ENCODE measurements at regions of chr1 and their contacts with region 1.

Region 1: DNA sequence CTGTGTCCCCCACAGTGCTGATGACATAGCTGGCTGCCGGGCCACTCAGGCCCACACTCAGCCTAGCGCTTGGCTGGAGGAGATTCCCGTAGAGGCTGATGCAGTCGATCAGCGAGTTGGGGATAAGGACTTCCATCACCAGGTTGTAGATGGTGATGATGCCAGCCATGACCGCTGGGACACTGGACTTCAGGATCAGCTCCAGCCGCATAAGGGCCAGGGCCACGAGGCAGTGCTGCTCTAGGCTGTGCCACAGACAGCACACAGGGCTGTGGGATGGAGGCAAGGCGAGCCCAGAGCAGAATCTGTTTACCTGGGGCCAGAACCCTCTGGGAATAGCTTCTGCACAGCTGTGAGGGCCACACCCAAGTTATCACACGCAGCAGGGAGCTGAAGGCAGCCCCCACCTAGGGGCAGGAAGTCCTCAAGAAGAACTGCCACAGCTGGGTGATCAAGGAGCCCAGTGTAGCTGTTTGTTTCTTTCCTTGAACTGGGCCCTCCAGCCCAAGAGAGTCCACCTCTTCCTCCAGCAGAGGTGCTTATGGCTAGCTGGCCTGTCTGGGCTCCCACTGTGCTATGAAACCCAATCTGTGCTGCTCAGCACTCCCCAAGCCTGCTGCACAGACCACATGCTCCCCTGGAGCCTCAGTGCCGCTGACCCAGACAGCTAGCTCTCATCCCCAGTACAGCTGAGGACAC is 6.2 kb downstream of the SLC2A1 start:
- DNase-seq: peak; percentile 58
- ATAC-seq: peak; percentile 58
- H3K4me3 Mint-ChIP-seq: peak overlapping the region; percentile 49
- H3K27ac Mint-ChIP-seq: peak overlapping the region; percentile 78
- H3K4me1 Mint-ChIP-seq: peaks cover 88% of the 10 kb centered on the region
- H3K27me3 Mint-ChIP-seq: no peaks in the 10 kb centered on the region

Region 2: DNA sequence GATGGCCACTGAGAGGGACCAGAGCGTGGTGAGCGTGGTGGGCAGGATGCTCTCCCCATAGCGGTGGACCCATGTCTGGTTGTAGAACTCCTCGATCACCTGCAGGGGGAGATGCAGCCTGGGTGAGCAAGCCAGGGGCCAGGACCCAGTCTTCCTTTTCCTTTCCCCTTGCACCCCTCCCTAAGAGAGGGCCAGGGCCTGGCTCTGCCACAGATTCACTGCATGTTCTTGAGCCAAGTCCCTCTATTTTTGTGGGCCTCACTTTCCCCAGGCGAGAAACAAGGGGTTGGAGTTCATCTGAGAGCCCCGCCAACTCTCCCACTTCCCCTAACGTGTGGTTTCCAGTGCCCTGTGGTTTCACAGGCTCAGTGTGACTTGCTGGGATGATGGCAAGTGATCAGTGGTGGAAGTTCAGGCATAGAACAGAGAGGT is 21.3 kb before region 1 on chr1:
- CTCF ChIA-PET with region 1: interaction called, 17 read pairs
- POLR2A ChIA-PET with region 1: interaction called, 17 read pairs
- DNase-seq: peak; percentile 78
- ATAC-seq: peak; percentile 44
- H3K4me3 Mint-ChIP-seq: peak overlapping the region; percentile 74
- H3K27ac Mint-ChIP-seq: peak overlapping the region; percentile 97
- H3K4me1 Mint-ChIP-seq: peaks cover 97% of the 10 kb centered on the region
- H3K27me3 Mint-ChIP-seq: no peaks in the 10 kb centered on the region

Region 3: DNA sequence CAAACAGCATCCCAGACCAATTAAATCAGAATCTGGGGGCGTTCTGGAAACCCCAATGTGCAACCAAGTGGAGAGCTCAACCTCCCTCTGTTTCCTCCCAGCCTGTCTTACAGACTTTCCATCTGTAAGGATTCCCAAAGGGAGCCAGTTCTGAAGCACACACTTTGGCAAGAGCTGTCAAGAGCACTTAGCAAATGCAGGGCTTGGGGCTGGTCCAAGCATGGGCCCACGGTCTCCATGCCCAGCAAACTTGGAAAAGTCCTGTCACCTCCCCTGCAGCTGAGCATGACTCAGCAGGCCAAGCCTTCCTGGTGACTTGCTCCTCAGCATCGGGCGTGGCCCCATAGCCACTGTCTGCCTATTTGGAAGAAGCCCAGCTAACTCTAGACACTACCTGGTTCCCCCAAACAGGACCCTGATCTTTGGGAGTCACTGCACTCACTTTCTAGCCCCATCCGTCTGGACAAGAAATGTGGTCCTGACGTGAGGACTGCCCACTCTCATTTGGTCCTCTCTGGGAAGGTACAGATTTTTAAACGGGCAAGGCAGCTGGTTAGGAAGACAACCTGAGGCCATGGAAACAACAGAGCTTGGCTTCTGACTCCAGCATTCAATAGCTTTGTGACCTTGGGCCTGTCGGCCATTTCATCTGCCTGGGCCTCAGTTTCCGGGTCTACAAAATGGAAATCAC is 10.7 kb before region 1 on chr1:
- CTCF ChIA-PET with region 1: interaction called, 16 read pairs
- POLR2A ChIA-PET with region 1: interaction called, 12 read pairs
- DNase-seq: no peak
- ATAC-seq: no peak
- H3K4me3 Mint-ChIP-seq: no peak overlapping the region
- H3K27ac Mint-ChIP-seq: peak overlapping the region; percentile 86
- H3K4me1 Mint-ChIP-seq: peaks cover 98% of the 10 kb centered on the region
- H3K27me3 Mint-ChIP-seq: no peaks in the 10 kb centered on the region